Activated CD4-positive, alpha-beta T cell treated with anti-CD3 and anti-CD28 coated beads for 36 hours (primary cell): ENCODE measurements at regions of chr5 and their contacts with region 1.

Region 1: DNA sequence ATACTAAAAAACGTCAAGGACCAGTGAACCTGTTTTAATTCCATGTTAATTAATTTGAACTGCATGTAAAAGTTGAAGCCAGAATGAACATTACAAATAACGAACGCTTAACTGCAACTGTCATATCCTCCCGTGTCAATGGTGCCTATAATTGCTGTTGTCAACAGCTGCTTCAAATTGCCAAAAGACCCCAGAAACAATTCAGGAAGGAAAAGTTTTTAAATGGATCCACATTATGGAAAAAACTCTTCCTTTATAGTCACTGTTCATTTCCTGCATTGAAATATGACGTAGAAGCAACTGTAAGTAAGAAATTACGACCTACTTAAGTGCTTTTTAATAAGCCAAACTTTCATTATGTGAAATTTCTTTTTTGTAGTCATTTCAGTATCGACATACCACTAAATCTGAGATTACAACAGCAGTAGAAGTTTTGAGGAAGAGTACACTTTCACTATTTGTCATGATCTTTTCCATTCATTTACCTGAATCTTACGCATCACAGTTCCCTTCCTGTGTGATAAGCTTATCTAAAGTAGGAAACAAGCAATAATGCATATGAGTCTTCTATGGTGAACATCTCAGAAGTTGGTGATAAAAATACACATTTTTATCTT is 37.8 kb downstream of the MEF2C start:
- DNase-seq: no peak
- ATAC-seq: peak; percentile 95
- H3K4me3 Mint-ChIP-seq: no peak overlapping the region
- H3K27ac Mint-ChIP-seq: no peak overlapping the region
- H3K4me1 Mint-ChIP-seq: peaks cover 11% of the 10 kb centered on the region
- H3K27me3 Mint-ChIP-seq: peaks cover 17% of the 10 kb centered on the region

Region 2: DNA sequence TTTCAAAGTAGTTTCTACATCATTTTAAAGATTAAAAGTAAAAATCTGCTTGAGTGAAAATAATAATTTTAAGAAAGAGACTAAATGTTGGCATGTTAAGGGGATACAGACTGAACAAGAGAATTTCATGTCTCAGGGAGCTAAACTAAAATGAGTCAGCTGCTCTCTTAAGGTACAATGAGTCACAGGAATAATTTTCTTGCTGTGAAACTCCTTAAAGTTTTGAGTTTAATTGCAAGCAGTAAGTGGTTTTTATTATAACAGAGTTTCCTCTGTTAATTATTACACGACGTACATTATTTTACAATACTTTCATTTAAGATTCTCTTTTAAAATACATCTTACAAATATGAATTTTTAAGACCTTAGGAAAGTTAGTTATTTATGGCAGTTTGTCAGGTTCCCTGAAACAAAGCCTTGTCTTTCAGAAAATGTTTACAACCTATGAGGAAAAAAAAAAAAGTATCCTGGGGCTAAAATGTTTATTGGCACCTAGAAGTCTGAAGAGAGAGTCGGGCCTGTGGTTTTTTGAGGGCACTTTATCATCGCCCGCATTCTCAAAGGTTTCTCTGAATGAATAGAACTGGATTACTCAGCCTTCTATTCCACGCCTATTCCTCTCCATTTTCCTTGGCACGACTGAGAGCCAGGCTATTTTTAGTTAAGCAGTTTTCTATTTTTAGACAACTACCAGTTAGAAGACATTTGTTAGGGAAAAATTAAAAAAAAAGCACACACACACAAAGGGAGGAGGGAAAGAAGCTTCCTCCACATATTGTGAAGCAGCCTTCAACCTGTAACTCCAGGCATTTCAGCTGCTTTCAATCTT is 59.6 kb before region 1 on chr5:
- CTCF ChIA-PET with region 1: no interaction called
- POLR2A ChIA-PET with region 1: no interaction called
- intact Hi-C with region 1: loop called in 1 of 2 experiments (anchors 1 kb)
- DNase-seq: peak; percentile 30
- ATAC-seq: peak; percentile 89
- H3K4me3 Mint-ChIP-seq: no peak overlapping the region
- H3K27ac Mint-ChIP-seq: no peak overlapping the region
- H3K4me1 Mint-ChIP-seq: peaks cover 17% of the 10 kb centered on the region
- H3K27me3 Mint-ChIP-seq: peaks cover 12% of the 10 kb centered on the region

Region 3: DNA sequence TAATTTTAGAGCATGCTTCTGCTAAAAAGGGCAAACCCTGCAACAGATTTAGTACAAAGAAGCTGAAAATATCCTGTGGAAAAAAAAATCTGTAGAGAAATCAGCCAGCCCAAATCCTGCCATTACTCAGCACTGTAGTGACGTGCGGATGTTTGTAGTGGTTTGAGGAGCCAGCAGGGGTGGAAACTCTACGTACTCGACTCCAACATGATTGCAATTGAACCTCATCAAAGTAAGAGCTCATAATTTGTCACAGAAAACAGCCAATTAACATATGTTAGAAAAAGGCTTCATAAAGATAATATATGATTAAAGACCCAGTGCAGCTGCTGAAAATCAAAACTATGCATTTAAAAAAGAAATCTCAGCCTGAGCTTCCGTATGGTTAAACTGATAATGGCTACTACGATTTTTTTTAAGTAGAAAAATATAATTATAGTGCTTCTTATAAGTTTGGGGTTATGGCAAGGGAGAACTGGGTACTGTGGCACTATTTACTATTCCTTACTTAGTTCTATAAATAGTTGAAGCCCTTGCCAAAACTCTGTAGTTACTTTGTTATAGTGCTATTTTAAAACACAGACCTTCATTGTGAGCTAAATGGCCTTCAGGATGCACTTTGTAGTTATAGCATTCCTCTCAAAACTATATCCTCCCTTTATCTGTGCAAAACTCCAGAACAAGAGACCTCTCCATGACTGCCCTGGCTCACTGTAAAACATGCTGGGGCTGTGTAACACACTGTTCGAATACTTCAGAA is 11.6 kb before region 1 on chr5:
- CTCF ChIA-PET with region 1: interaction called, 4 read pairs
- POLR2A ChIA-PET with region 1: no interaction called
- intact Hi-C with region 1: loop called (anchors 1 kb)
- DNase-seq: peak; percentile 82
- ATAC-seq: peak; percentile 96
- H3K4me3 Mint-ChIP-seq: no peak overlapping the region
- H3K27ac Mint-ChIP-seq: no peak overlapping the region
- H3K4me1 Mint-ChIP-seq: peaks cover 39% of the 10 kb centered on the region
- H3K27me3 Mint-ChIP-seq: peaks cover 22% of the 10 kb centered on the region